ENCODE measurements at regions of chr5 and their contacts with region 1.

Region 1: DNA sequence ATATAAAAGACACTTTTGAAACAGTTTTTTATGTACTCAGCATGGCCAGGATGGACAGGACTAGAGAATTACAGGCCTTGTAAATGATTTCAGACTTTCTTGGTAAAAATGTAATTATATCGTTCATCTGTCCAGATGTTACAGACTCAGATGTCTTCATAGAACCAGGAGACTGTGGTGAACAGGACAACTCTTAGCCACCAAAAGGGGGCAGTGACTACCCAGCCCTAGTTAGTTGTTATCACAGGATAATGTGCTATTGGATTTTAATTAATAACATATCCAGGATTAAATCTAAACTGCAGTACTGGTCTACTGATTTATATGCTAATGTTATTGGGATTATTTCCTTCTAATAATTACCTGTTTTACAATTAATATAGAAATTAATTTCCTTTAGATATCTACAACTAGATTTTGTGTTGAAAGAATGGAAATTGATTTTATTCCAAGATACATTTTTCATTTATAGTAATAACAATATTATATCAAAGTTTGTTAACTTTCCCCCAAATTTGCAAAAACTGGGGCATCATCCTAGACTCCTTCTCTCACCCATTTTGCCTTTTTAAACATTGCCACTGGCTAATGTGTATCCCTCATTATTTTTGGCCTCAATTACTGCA is 99.4 kb downstream of the MTREX start:
- DNase-seq: peak in 3 of 10 donors; percentile 18 to 57 (median 42)
- H3K4me3 ChIP-seq: no peak overlapping the region
- H3K27ac ChIP-seq: peak overlapping the region in 7 of 59 donors; percentile 6 to 40 (median 14)
- H3K27me3 ChIP-seq: no peaks in the 10 kb centered on the region
- CTCF ChIP-seq: peak in 55 of 56 donors; percentile 42 to 90 (median 73)

Region 2: DNA sequence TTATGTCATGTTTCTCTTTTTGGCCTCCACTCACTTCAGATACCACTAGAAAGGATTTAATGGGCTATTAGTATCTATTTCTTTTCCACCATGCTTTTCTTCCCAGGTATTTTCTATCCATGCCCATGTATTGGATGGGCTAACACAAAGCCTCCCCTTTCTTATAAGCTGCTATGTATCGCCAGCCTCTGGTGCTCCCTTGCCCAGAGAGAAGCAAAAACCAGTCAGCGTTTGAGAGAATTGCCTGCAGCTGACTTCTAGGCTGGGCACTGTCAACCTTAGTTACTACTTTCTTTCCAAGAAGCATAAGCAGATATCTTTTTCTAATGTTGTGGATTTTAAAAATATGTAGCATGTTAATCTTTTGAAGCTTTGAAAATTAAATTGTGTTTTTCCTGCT is 981.9 kb before region 1 on chr5:
- intact Hi-C with region 1: no loop called
- DNase-seq: no peak
- H3K4me3 ChIP-seq: no peak overlapping the region
- H3K27ac ChIP-seq: no peak overlapping the region
- H3K27me3 ChIP-seq: peaks cover 0 to 10% (median 0%) of the 10 kb centered on the region in 45 donors
- CTCF ChIP-seq: no peak

Region 3: GRCh38 chr5:55344392-55344992 is 62.7 kb before region 1 on chr5:
- intact Hi-C with region 1: loop called in 1 of 2 experiments (anchors 10 kb)
- DNase-seq: peak in 9 of 10 donors; percentile 47 to 90 (median 56)
- H3K4me3 ChIP-seq: peak overlapping the region in 1 of 59 donors; percentile 3
- H3K27ac ChIP-seq: peak overlapping the region in 33 of 59 donors; percentile 2 to 75 (median 36)
- H3K27me3 ChIP-seq: no peaks in the 10 kb centered on the region
- CTCF ChIP-seq: peak; percentile 79 to 98 (median 91)

Region 4: DNA sequence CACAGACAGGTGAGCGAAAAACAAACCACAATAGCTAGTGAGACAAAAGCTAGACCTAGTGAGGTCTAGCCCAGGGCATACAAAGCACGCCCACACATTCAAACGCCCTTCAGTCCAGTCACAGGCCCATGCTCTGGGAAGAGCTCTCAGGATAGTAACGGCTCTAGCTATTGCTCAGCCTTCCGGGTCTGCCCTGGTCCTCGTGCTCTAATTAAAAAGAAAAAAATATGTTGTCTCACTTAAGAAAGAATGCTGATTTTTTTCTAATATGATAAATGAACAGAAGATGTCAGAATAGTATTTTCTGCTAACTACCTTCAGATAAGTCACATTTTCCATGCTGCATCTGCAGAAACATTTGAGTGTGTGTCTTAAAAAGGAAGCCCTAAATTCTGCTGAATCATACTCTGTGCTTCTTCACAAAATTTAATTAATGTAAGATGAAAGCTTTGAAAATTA is 33.0 kb after region 1 on chr5:
- intact Hi-C with region 1: no loop called
- DNase-seq: peak in 1 of 10 donors; percentile 17
- H3K4me3 ChIP-seq: peak overlapping the region in 1 of 59 donors; percentile 6
- H3K27ac ChIP-seq: peak overlapping the region; percentile 56 to 95 (median 87)
- H3K27me3 ChIP-seq: no peaks in the 10 kb centered on the region
- CTCF ChIP-seq: no peak

Region 5: GRCh38 chr5:55680353-55680752 is 273.2 kb after region 1 on chr5:
- intact Hi-C with region 1: loop called in 1 of 2 experiments (anchors 10 kb)
- DNase-seq: no peak
- H3K4me3 ChIP-seq: peak overlapping the region in 30 of 59 donors; percentile 2 to 54 (median 25)
- H3K27ac ChIP-seq: peak overlapping the region in 53 of 59 donors; percentile 2 to 86 (median 67)
- H3K27me3 ChIP-seq: no peaks in the 10 kb centered on the region
- CTCF ChIP-seq: no peak